GM12878 (cell line): ENCODE measurements at regions of chr5 and their contacts with region 1.

Region 1: DNA sequence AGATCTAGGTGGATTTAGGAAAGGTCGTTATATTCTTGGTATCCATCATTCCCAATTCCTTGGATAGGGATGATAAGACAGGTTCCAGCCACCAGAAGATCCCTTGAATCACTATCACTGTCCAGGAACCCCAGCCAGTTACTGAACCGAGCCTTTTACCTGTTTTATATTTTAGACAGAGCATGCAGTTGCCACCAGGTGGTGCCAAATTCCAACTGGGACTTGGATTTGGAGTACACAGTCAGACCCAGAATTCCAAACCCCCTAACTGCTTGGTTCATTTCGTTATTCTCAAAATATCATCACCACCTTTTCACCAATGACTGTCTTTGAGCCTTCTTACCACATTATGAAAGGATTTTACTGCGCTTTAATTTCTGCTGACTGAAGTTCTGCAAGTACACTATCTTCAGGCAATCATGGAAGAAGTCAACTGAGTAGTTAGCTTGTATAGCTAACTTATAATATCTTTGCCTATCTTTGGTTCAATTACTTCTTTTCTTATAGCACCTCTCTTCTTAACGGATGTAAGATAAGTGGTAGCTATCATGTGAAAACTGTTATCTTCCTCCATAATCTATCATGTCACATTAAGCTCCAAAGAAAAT is 191.8 kb downstream of the PRR16 start:
- DNase-seq: no peak
- ATAC-seq: peak; percentile 64; the same call in 2 of the 3 replicates
- H3K4me3 ChIP-seq: no peak overlapping the region
- H3K27ac ChIP-seq: no peak overlapping the region
- H3K4me1 ChIP-seq: no peaks in the 10 kb centered on the region
- H3K27me3 ChIP-seq: no peaks in the 10 kb centered on the region
- CTCF ChIP-seq: peak; percentile 38 to 50 (median 46); a peak in 5 of 6 replicates
- EP300 ChIP-seq: no peak
- POLR2A ChIP-seq: no peak
- RAD21 ChIP-seq: peak; percentile 43

Region 2: GRCh38 chr5:121949867-121950266 is 1293.9 kb after region 1 on chr5:
- CTCF ChIA-PET with region 1: interaction called, 14 read pairs
- POLR2A ChIA-PET with region 1: no interaction called
- RAD21 ChIA-PET with region 1: interaction called, 4 read pairs
- SMC1A ChIA-PET with region 1: interaction called, 3 read pairs
- in situ Hi-C with region 1: no loop called
- intact Hi-C with region 1: loop called (anchors 2 kb)
- DNase-seq: no peak
- ATAC-seq: peak; percentile 60
- H3K4me3 ChIP-seq: no peak overlapping the region
- H3K27ac ChIP-seq: no peak overlapping the region
- H3K4me1 ChIP-seq: no peaks in the 10 kb centered on the region
- H3K27me3 ChIP-seq: no peaks in the 10 kb centered on the region
- CTCF ChIP-seq: peak; percentile 41 to 68 (median 49); a peak in 5 of 6 replicates
- EP300 ChIP-seq: no peak
- POLR2A ChIP-seq: no peak
- RAD21 ChIP-seq: peak; percentile 79